IMR-90 (cell line): ENCODE measurements at regions of chr19 and their contacts with region 1.

Region 1: GRCh38 chr19:46283771-46284170 is 13.1 kb upstream of the HIF3A start:
- DNase-seq: no peak
- ATAC-seq: no peak
- H3K4me3 ChIP-seq: no peak overlapping the region
- H3K27ac ChIP-seq: no peak overlapping the region
- H3K4me1 ChIP-seq: no peaks in the 10 kb centered on the region; the same call in 1 of the 2 replicates
- H3K27me3 ChIP-seq: peaks cover 8% of the 10 kb centered on the region
- CTCF ChIP-seq: no peak
- POLR2A ChIP-seq: no peak
- RAD21 ChIP-seq: no peak

Region 2: DNA sequence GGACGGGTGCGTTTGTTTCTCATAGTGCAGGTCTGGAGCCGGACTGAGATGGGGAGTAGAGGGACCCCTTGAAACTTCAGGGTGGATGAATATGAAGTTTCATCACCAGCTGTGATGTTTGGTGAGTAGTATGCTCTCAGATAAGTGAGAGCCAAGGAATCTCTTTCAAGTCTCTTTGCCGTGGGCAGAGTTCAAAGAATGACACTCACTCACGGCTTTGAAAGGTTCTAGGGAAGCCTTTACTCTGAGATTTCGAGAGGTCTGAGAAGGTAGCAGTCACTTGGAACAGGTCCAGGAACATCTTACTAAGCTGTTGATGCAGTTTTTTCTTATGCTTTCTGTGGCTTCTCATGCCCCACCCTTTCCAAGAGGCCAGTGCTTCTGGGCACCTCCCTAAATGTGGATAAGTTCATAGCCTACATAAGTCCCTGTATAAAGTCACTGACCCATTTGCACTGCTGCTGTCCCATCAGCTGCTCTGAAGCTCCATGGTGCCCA is 135.9 kb before region 1 on chr19 and contains the start of gene IGFL2:
- CTCF ChIA-PET with region 1: no interaction called
- POLR2A ChIA-PET with region 1: no interaction called
- dilution Hi-C with region 1: no loop called
- in situ Hi-C with region 1: no loop called
- intact Hi-C with region 1: no loop called
- DNase-seq: no peak
- ATAC-seq: no peak
- H3K4me3 ChIP-seq: no peak within 1 kb of the TSS
- H3K27ac ChIP-seq: no peak within 1 kb of the TSS
- H3K4me1 ChIP-seq: no peaks in the 10 kb centered on the region
- H3K27me3 ChIP-seq: peaks cover 48% of the 10 kb centered on the region
- CTCF ChIP-seq: no peak
- POLR2A ChIP-seq: no peak
- RAD21 ChIP-seq: no peak
- total RNA-seq, gene IGFL2: not detected in 2 replicates

Region 3: GRCh38 chr19:46239193-46240024 is 44.4 kb before region 1 on chr19:
- CTCF ChIA-PET with region 1: no interaction called
- POLR2A ChIA-PET with region 1: no interaction called
- dilution Hi-C with region 1: no loop called
- in situ Hi-C with region 1: no loop called
- intact Hi-C with region 1: no loop called
- DNase-seq: no peak
- ATAC-seq: no peak
- H3K4me3 ChIP-seq: no peak overlapping the region
- H3K27ac ChIP-seq: no peak overlapping the region
- H3K4me1 ChIP-seq: no peaks in the 10 kb centered on the region
- H3K27me3 ChIP-seq: peaks cover 25% of the 10 kb centered on the region
- CTCF ChIP-seq: no peak
- POLR2A ChIP-seq: no peak
- RAD21 ChIP-seq: no peak

Region 4: DNA sequence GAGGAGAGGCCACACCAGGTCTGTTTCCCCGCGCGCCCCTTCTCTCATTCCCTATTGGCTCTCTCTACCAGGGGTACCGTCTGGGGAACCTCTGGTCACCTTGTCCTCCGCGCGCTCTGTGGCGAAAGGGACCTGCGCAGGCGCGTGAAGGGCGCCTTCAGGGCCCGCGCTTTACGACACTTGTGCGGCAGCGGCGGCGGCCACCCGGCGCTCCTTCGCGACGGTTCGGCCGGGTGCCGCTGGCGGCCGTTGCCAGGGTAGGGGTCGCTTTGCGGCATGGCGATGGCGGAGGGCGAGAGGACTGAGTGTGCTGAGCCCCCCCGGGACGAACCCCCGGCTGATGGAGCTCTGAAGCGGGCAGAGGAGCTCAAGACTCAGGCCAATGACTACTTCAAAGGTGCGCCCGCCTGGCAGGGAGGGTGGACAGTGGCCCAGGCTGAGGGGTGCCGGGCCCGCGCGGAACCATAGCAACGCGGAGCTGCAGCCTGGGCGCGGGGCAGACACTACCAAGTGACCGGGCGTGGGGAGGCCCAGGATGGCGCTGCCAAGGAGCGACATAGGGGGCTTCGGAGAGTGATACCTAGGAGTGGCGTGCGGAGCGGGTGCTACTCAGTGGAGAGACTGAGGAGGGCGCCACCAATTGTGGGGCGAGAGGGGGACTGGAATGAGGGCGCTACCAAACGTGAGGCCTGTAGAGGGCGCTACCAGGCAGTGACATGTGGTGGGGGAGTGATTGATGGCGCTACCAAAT is 63.2 kb after region 1 on chr19 and contains the start of gene PPP5C:
- CTCF ChIA-PET with region 1: no interaction called
- POLR2A ChIA-PET with region 1: no interaction called
- dilution Hi-C with region 1: no loop called
- in situ Hi-C with region 1: no loop called
- intact Hi-C with region 1: loop called (anchors 5 kb)
- DNase-seq: peak; percentile 90
- ATAC-seq: peak; percentile 92
- H3K4me3 ChIP-seq: peak within 1 kb of the TSS; percentile 90
- H3K27ac ChIP-seq: peak within 1 kb of the TSS; percentile 95
- H3K4me1 ChIP-seq: peaks cover 15% of the 10 kb centered on the region
- H3K27me3 ChIP-seq: peaks cover 4% of the 10 kb centered on the region; the same call in 1 of the 2 replicates
- CTCF ChIP-seq: peak; percentile 99
- POLR2A ChIP-seq: no peak
- RAD21 ChIP-seq: peak; percentile 48
- total RNA-seq, gene PPP5C: 68.9 and 80.5 TPM in 2 replicates

Region 5: DNA sequence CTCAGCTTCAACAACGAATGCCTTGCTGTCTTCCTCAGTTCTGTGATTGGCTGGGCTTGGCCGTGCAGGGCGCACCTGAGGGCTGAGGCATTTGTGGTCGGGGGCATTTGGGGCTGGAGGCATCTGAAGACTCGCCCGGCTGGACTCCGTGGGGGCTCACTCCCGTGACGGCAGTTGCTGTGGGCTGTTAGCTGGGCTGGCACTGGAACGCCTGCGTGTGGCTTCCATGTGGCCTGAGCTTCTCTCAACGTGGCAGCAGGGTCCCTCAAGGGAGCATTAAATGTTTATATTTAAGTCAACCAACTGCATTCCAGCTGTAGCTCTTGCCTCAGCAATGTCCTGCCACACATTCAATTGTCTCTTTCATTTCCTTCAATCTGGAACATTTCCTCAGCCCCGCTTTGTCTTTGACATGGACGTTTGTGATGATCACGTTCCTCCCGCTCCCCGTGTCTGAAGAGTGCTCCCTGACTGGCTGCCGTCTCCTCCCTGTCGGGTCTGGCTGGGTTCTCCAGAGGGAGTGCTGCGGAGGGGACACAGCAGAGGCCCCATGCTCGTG is 108.6 kb after region 1 on chr19:
- CTCF ChIA-PET with region 1: no interaction called
- POLR2A ChIA-PET with region 1: no interaction called
- dilution Hi-C with region 1: no loop called
- in situ Hi-C with region 1: loop called (anchors 10 kb)
- intact Hi-C with region 1: loop called (anchors 2 kb)
- DNase-seq: peak; percentile 63
- ATAC-seq: peak; percentile 71
- H3K4me3 ChIP-seq: no peak overlapping the region
- H3K27ac ChIP-seq: peak overlapping the region; percentile 63
- H3K4me1 ChIP-seq: peaks cover 15% of the 10 kb centered on the region
- H3K27me3 ChIP-seq: no peaks in the 10 kb centered on the region
- CTCF ChIP-seq: no peak
- POLR2A ChIP-seq: no peak
- RAD21 ChIP-seq: no peak

Region 6: DNA sequence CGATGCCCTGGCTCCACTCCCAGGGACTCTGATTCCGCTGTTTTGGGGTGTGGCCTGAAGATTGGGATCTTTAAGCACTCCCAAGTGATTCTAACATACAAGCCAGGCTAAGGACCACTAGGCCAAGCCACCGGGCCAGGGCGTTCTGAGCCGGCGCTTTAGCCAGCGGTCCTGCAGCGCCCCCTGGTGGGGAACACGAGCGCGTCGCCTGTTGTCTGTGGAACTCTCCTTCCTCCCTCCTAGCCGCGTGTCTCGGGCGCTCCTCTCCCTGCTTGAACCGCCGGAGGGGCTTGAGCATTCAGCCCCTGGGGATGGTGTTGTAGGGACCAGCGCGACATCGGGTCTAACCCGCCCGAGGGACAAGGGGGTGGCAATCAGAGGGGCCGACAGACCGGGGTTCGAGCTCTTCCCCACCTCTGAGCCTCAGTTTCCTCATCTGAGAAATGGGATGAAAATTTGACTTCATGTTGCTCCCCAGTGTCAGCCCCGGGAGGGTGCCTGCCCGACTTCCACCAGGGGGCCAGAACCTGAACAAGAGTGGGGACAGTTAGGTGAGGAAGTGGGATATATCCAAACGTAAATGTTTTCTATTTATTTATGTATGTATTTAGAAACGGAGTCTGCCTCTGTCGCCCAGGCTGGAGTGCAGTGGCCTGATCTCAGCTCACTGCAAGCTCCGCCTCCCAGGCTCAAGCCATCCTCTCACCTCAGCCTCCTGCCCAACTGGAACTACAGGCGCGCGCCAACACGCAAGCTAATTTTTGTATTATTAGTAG is 229.9 kb after region 1 on chr19:
- CTCF ChIA-PET with region 1: interaction called, 5 read pairs
- POLR2A ChIA-PET with region 1: no interaction called
- dilution Hi-C with region 1: no loop called
- in situ Hi-C with region 1: no loop called
- intact Hi-C with region 1: loop called (anchors 1 kb)
- DNase-seq: peak; percentile 51
- ATAC-seq: peak; percentile 91
- H3K4me3 ChIP-seq: no peak overlapping the region
- H3K27ac ChIP-seq: no peak overlapping the region
- H3K4me1 ChIP-seq: no peaks in the 10 kb centered on the region
- H3K27me3 ChIP-seq: peaks cover 10% of the 10 kb centered on the region
- CTCF ChIP-seq: peak; percentile 84
- POLR2A ChIP-seq: no peak
- RAD21 ChIP-seq: peak; percentile 86